ENCODE measurements at regions of chr10 and their contacts with region 1.

Region 1: GRCh38 chr10:61175316-61175715 is 231.3 kb upstream of the RHOBTB1 start:
- DNase-seq: no peak
- ATAC-seq: peak; percentile 74

Region 2: DNA sequence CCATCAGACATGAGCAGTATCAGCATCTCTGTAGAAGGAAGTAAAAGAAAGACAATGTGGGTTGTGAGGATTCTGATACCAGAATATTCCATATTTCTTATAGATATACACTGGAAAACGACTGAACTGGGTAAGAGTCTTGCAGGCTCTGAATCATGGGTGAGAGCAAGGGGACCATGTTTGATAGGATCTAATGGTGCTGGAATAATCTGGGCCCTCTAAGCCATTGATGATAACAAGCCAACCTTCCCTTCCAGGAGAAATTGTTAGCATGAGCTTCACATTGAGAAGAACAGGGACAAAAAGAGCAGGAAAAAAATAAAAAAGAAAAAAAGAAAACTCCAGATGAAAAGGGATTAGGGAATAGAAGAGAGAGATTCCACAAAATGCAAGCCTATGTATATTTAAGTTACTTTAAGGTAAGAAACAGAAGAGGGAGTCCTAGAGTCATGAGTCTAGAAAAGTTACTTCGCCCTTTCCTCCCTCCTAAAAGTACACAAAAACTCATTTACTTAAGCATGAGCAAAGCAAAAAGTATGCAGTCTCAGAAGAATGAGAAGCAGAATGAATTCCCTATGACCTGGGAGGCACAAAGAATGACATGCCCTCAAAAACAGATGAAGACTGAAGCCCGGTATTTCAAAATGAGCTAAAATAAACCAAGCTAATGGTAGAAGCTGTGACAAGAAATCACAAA is 96.0 kb after region 1 on chr10:
- intact Hi-C with region 1: no loop called
- DNase-seq: no peak
- ATAC-seq: no peak

Region 3: DNA sequence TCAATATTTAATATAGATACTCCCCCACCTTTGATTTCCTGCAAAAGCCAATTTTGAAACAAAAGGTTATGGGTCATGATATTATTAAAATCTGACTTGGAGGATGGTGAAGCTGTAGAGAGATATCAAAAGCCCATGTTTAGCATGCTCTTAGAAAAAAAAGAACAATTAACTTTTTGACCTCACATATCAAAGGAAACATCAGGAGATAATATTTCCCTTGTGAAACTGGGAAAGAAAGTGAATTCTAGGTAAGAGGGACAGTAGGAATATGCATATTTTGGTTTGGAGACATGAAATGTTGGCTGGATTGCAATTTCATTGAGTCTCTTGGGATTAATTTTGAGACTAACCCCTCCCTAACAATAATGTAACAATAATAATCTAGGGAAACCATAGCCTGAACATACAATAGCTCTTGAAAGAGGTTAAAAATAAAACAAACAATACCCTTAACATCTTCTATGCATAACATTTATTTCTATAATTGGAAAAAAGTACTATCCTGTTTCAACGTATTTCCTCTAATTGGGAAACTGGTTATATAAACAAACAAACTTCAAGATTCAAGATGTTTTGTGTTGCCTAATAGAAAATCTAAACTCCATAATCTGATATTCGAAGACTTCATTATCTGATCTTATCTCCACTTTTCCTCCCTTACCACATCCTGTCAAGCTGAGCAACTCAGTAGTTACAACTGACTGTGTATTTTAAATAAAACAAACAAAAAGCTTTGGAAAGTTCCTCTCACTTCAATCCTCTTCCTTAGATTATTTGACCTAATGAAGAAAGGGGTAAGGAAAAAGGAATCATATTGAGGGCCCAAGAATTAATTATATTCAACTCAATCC is 263.1 kb after region 1 on chr10:
- intact Hi-C with region 1: loop called (anchors 5 kb)
- DNase-seq: no peak
- ATAC-seq: no peak

Measured in Right ventricle myocardium inferior (tissue), 1 donor.